Head of caudate nucleus (tissue), 42 donors: ENCODE measurements at regions of chr1 and their contacts with region 1.

Region 1: DNA sequence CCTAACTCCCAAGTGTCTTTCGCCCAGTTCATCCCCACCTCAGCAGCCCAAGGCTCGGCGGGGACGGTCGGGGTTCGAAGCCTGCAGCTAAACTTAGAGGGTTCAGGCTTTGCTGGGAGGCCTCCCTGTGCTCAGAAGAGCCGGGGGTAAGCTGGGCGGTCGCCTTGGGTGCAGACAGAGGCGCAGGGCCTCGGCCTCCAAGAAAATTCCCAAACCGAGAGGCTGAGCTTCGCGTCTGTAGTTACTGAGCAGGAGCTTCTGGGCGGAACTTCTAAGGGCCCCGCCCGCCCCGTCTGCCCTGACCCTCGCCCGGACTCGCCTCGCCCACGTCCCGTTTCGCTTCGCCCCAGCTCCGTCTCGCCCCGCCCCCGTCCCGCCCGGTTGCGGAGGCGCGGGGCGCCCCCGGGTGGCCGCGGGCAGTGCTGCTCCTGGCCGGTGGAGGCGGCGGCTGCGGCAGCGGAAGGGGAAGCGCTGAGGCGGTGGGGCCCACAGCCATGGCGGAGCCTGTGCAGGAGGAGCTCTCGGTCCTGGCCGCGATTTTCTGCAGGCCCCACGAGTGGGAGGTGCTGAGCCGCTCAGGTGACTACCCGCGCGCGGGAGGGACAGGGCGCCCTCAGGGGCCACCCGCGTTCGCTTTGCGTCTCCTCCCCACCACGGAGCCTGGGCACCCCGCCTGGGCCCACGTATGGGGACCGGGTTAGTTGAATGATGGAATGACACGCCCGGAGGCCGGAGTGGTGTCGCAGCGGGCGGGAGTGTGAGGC is at the start of gene RWDD3:
- DNase-seq: peak; percentile 73 to 96 (median 93)

Region 2: DNA sequence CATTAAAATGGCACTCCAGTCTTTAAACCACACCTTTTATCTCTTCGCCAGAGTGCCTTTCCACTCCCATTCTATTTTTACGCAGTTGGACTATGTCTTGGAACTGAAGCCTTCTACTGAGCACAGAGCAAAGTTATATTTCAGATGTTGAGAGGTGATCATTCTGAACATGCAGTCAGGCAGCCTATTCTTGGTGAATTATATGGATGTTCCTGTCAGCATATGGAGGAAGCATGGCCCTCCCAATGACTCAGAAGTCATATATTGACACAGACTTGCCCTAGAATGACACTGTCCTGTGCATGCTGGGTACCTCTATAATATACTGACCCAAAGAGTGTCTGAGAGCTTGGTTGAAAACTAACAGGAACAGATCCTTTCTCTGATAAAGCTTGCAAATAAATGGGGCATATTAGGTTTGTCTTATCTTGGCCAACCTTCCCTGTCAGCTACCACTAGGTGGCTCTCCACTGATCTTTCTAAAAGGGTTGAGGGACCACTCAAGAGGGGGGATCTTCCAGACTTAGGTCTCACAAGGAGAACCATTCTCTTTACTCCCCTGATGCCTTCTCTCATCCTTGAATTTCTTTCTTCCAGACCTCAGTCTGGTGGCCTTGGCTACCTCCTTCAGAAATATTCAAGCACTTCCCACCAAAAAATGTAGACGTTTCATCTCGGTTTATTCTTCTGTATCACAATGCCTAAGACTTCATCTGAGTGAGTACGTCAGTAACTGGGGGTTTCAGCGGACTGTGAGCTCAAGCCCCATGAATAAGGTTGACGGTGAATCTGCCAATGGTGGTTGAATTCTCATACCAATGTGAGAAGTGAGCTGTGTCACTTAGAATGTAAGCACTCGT is 149.4 kb before region 1 on chr1:
- intact Hi-C with region 1: loop called (anchors 5 kb)
- DNase-seq: peak in 28 of 42 donors; percentile 17 to 80 (median 42)

Region 3: GRCh38 chr1:95116580-95117206 is 117.2 kb before region 1 on chr1:
- intact Hi-C with region 1: loop called (anchors 5 kb)
- DNase-seq: peak; percentile 50 to 90 (median 74)

Region 4: DNA sequence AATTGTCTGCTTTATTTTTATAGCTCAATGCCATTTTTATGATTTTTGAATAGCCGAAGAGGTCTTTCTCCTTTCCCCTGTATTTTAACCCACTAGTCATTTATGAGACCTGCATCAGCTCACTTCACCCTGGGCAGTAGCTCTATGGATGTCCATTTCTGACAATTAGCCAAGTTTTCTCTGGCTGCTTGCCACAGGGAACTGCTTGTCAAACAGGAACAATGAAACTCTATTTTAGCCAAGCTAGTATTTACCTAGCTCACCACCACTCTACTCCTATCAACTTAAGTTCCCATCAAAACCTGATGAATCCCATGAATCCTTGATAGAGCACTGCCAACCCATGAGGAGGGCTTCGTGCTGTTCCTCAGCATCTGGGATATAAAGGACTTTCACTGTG is 406.8 kb after region 1 on chr1:
- intact Hi-C with region 1: no loop called
- DNase-seq: peak in 18 of 42 donors; percentile 3 to 65 (median 21)